A673 (cell line): ENCODE measurements at regions of chr13 and their contacts with region 1.

Region 1: DNA sequence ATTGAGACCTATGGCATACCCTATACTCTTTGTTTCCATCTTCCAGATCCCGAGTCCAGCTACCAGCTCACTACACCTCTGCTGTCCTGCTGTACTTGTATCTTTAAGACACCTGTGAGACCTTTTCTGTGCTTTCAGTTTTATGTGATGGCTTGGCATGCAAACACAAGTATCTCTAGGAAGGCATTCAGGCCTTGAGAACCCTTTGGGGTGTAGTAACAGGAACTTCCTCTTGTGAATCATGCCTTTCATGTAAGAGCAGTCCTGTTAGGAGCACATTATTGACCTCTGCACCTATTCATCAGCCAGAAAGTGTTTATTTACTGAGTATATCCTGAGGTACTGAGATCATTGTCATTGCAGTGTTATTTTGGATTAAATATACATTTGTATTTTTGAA is 87.0 kb upstream of the HTR2A start:
- DNase-seq: no peak
- H3K4me3 ChIP-seq: no peak overlapping the region
- H3K27ac ChIP-seq: no peak overlapping the region
- H3K4me1 ChIP-seq: no peaks in the 10 kb centered on the region
- H3K27me3 ChIP-seq: peaks cover 31% of the 10 kb centered on the region
- CTCF ChIP-seq: no peak

Region 2: GRCh38 chr13:45575146-45575829 is 1408.6 kb before region 1 on chr13:
- CTCF ChIA-PET with region 1: no interaction called
- POLR2A ChIA-PET with region 1: no interaction called
- intact Hi-C with region 1: no loop called
- DNase-seq: no peak
- H3K4me3 ChIP-seq: no peak overlapping the region
- H3K27ac ChIP-seq: no peak overlapping the region
- H3K4me1 ChIP-seq: peaks cover 6% of the 10 kb centered on the region
- H3K27me3 ChIP-seq: no peaks in the 10 kb centered on the region
- CTCF ChIP-seq: no peak

Region 3: GRCh38 chr13:47081246-47081645 is 97.4 kb after region 1 on chr13:
- CTCF ChIA-PET with region 1: no interaction called
- POLR2A ChIA-PET with region 1: interaction called, 10 read pairs
- intact Hi-C with region 1: no loop called
- DNase-seq: no peak
- H3K4me3 ChIP-seq: no peak overlapping the region
- H3K27ac ChIP-seq: no peak overlapping the region
- H3K4me1 ChIP-seq: no peaks in the 10 kb centered on the region
- H3K27me3 ChIP-seq: peaks cover 24% of the 10 kb centered on the region
- CTCF ChIP-seq: no peak